Spleen (tissue), 13 donors: ENCODE measurements at regions of chr16 and their contacts with region 1.

Region 1: GRCh38 chr16:68396481-68396880 is 51.8 kb downstream of the SMPD3 start:
- DNase-seq: peak; percentile 51
- H3K4me3 ChIP-seq: no peak overlapping the region
- H3K27ac ChIP-seq: no peak overlapping the region
- H3K4me1 ChIP-seq: no peaks in the 10 kb centered on the region
- H3K27me3 ChIP-seq: no peaks in the 10 kb centered on the region
- CTCF ChIP-seq: peak; percentile 52 to 80 (median 71)
- POLR2A ChIP-seq: no peak

Region 2: GRCh38 chr16:68310761-68311511 is 85.5 kb before region 1 on chr16 and contains the starts of genes PRMT7 and SLC7A6OS:
- intact Hi-C with region 1: no loop called
- DNase-seq: peak; percentile 99
- H3K4me3 ChIP-seq: peak within 1 kb of the TSS; percentile 83 to 98 (median 88)
- H3K27ac ChIP-seq: peak within 1 kb of the TSS; percentile 78 to 94 (median 90)
- H3K4me1 ChIP-seq: peaks cover 24 to 81% (median 49%) of the 10 kb centered on the region in 6 donors
- H3K27me3 ChIP-seq: no peaks in the 10 kb centered on the region
- CTCF ChIP-seq: peak in 10 of 11 experiments; percentile 26 to 76 (median 46)
- POLR2A ChIP-seq: peak in 2 of 3 donors; percentile 48 to 66
- total RNA-seq, gene PRMT7: 31.9 to 66.4 (median 42.8) TPM
- total RNA-seq, gene SLC7A6OS: 17.6 to 30.6 (median 26.6) TPM

Region 3: GRCh38 chr16:68512183-68512582 is 115.7 kb after region 1 on chr16:
- intact Hi-C with region 1: loop called (anchors 5 kb)
- DNase-seq: peak; percentile 54
- H3K4me3 ChIP-seq: no peak overlapping the region
- H3K27ac ChIP-seq: no peak overlapping the region
- H3K4me1 ChIP-seq: peaks cover 0 to 20% (median 8%) of the 10 kb centered on the region in 6 donors
- H3K27me3 ChIP-seq: peaks cover 0 to 16% (median 0%) of the 10 kb centered on the region in 7 donors
- CTCF ChIP-seq: no peak
- POLR2A ChIP-seq: no peak